Breast epithelium (tissue), 4 donors: ENCODE measurements at regions of chr5 and their contacts with region 1.

Region 1: DNA sequence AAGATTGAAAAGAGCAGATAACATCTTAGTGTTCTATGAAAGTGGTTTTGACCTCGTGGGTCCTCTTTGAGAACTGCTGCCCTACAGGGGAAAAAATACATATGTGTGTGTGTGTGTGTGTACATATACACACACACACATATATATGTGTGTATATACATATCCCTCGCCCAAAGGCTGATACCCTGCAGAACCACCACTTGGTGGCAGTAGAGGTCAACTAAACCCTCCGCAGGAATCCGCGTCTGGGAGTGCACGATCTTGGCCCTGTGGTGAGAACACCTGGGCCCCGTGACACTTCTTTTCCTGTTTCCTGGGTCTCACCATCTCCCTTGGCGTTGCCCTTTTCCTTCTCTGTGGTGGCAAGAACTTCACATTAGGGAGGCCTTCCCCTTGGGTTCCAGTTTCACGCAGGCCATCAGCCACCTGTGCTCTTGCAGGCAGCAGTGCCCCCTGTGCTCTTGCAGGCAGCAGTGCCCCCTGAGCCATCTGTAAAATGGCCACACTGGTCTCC is 8.2 kb downstream of the IL9 start:
- DNase-seq: peak in 1 of 2 donors; percentile 23
- H3K4me3 ChIP-seq: no peak overlapping the region
- H3K27ac ChIP-seq: no peak overlapping the region
- H3K4me1 ChIP-seq: no peaks in the 10 kb centered on the region
- H3K27me3 ChIP-seq: peaks cover 0 to 10% of the 10 kb centered on the region in 2 donors
- CTCF ChIP-seq: peak in 2 of 3 donors; percentile 68 to 80
- POLR2A ChIP-seq: no peak

Region 2: GRCh38 chr5:135405082-135405481 is 482.3 kb before region 1 on chr5:
- intact Hi-C with region 1: loop called (anchors 5 kb)
- DNase-seq: no peak
- H3K4me3 ChIP-seq: no peak overlapping the region
- H3K27ac ChIP-seq: no peak overlapping the region
- H3K4me1 ChIP-seq: no peaks in the 10 kb centered on the region
- H3K27me3 ChIP-seq: no peaks in the 10 kb centered on the region
- CTCF ChIP-seq: no peak
- POLR2A ChIP-seq: no peak

Region 3: GRCh38 chr5:135851186-135851914 is 36.1 kb before region 1 on chr5:
- intact Hi-C with region 1: loop called (anchors 1 kb)
- DNase-seq: no peak
- H3K4me3 ChIP-seq: no peak overlapping the region
- H3K27ac ChIP-seq: no peak overlapping the region
- H3K4me1 ChIP-seq: no peaks in the 10 kb centered on the region
- H3K27me3 ChIP-seq: peaks cover 0 to 3% of the 10 kb centered on the region in 2 donors
- CTCF ChIP-seq: no peak
- POLR2A ChIP-seq: no peak